Body of pancreas (tissue), 4 donors: ENCODE measurements at regions of chr11 and their contacts with region 1.

Region 1: DNA sequence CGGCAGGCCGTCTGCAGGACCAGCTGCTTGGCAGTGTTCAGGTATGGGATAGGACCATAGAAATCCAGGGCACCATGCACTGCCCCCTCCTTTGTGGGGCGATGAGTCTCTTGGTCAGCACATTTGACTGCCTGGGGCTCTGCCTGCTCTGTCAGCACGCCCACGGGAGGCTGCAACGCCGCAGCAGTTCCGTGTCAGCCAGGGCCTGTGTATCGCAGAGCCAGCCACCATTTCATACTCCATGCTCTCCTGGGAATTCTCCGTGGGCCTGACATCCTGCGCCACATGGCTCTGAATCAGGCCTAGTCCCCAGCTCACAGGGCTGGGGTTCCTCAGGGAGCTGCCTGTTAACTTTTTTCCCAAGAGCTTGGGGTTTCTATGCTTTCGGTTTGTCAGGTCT is 16.9 kb upstream of the RELT start:
- DNase-seq: peak in 3 of 4 donors; percentile 31 to 62 (median 39)
- ATAC-seq: peak; percentile 34
- H3K4me3 ChIP-seq: no peak overlapping the region
- H3K27ac ChIP-seq: no peak overlapping the region
- H3K4me1 ChIP-seq: no peaks in the 10 kb centered on the region
- H3K27me3 ChIP-seq: no peaks in the 10 kb centered on the region
- CTCF ChIP-seq: no peak
- POLR2A ChIP-seq: no peak

Region 2: DNA sequence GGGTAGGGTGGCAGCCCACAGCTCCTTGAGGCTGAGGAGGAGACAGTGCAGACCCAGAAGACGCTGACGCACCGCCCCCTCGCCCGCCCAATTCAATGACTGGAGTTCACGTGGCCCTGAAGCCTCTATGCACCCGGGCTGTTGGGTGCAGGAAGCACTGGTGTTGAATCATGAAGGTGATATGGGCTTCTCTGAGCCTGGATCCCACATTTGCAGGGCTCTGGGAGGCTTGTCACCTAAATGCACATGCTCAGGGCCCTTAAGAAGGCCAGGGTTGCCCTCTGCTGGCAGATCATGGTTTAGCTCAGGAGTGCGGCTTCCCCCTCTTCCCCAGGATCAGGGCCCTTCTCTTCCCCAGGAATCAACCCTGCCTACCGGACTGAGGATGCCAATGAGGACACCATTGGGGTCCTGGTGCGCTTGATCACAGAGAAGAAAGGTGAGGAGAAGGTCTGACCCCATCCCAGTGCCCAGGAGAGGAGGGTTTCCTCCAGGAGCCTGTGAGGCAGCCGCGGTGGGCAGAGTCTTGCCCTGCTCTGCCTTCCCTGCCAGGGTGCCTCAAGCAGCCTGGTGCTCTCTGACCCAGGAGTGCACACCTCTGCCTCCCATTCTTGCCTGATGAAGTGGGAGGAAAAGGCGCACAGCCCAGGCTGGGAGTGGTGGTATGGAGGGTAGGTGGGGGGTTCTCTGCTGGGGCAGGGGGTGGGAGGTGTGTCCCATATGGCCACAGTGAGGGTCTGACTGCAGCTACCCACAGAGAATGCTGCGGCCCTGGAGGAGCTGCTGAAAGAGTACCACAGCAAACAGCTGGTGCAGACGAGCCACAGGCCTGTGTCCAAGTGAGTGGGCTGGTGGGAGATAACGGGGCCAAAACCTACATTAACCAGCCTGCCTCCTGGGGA is 34.4 kb after region 1 on chr11:
- intact Hi-C with region 1: loop called (anchors 5 kb)
- DNase-seq: peak; percentile 77 to 86 (median 80)
- ATAC-seq: peak; percentile 81
- H3K4me3 ChIP-seq: no peak overlapping the region
- H3K27ac ChIP-seq: no peak overlapping the region
- H3K4me1 ChIP-seq: peaks cover 7% of the 10 kb centered on the region
- H3K27me3 ChIP-seq: no peaks in the 10 kb centered on the region
- CTCF ChIP-seq: peak; percentile 64 to 90 (median 77)
- POLR2A ChIP-seq: no peak